ENCODE measurements at regions of chr10 and their contacts with region 1.

Region 1: GRCh38 chr10:43361986-43362839 is 9.2 kb upstream of the FXYD4 start:
- DNase-seq: peak; percentile 86 to 98 (median 97)
- ATAC-seq: peak; percentile 98
- H3K4me3 ChIP-seq: peak overlapping the region; percentile 92
- H3K4me3 Mint-ChIP-seq: peak overlapping the region; percentile 92 to 100 (median 97)
- H3K27ac ChIP-seq: peak overlapping the region; percentile 88
- H3K27ac Mint-ChIP-seq: peak overlapping the region; percentile 96 to 99 (median 97)
- H3K4me1 ChIP-seq: peaks cover 4 to 14% of the 10 kb centered on the region in 2 donors
- H3K4me1 Mint-ChIP-seq: peaks cover 13 to 33% (median 29%) of the 10 kb centered on the region in 7 donors
- H3K27me3 ChIP-seq: no peaks in the 10 kb centered on the region
- H3K27me3 Mint-ChIP-seq: no peaks in the 10 kb centered on the region

Region 2: GRCh38 chr10:42933448-42934340 is 428.5 kb before region 1 on chr10:
- CTCF ChIA-PET with region 1: interaction called, 3 read pairs
- POLR2A ChIA-PET with region 1: no interaction called
- intact Hi-C with region 1: loop called in 1 of 2 experiments (anchors 1 kb)
- DNase-seq: peak in 8 of 9 donors; percentile 24 to 81 (median 66)
- ATAC-seq: peak; percentile 66
- H3K4me3 ChIP-seq: peak overlapping the region; percentile 60
- H3K4me3 Mint-ChIP-seq: peak overlapping the region in 9 of 10 donors; percentile 87 to 93 (median 91)
- H3K27ac ChIP-seq: peak overlapping the region; percentile 73
- H3K27ac Mint-ChIP-seq: peak overlapping the region in 7 of 9 donors; percentile 82 to 95 (median 90)
- H3K4me1 ChIP-seq: peaks cover 0 to 12% of the 10 kb centered on the region in 2 donors
- H3K4me1 Mint-ChIP-seq: peaks cover 9 to 25% (median 19%) of the 10 kb centered on the region in 7 donors
- H3K27me3 ChIP-seq: no peaks in the 10 kb centered on the region
- H3K27me3 Mint-ChIP-seq: peaks cover 5 to 38% (median 31%) of the 10 kb centered on the region in 5 donors

Region 3: DNA sequence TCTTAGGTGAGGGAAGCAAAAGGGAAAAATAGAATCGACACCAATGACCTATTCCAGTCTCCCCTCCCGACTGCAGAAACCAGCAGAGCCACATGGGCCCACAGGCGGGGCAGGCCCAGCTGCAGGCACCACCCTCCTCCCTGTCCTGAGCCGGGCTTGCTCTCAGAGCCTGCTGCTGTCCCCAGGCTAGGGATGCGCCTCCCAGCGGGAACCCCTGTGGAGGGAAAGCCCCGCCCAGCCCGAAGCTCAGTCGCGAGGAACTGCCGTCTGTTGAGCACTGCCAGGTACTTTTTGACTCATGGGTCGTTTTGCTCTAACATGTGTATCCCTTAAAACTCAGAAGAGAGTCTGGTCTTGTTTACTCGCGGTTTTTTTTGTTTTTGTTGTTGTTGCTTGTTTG is 409.9 kb before region 1 on chr10:
- CTCF ChIA-PET with region 1: no interaction called
- POLR2A ChIA-PET with region 1: no interaction called
- intact Hi-C with region 1: no loop called
- DNase-seq: peak in 1 of 9 donors; percentile 15
- ATAC-seq: no peak
- H3K4me3 ChIP-seq: no peak overlapping the region
- H3K4me3 Mint-ChIP-seq: no peak overlapping the region
- H3K27ac ChIP-seq: no peak overlapping the region
- H3K27ac Mint-ChIP-seq: no peak overlapping the region
- H3K4me1 ChIP-seq: no peaks in the 10 kb centered on the region
- H3K4me1 Mint-ChIP-seq: peaks cover 0 to 2% (median 0%) of the 10 kb centered on the region in 7 donors
- H3K27me3 ChIP-seq: no peaks in the 10 kb centered on the region
- H3K27me3 Mint-ChIP-seq: peaks cover 0 to 15% (median 8%) of the 10 kb centered on the region in 5 donors

Region 4: GRCh38 chr10:43322769-43323168 is 39.4 kb before region 1 on chr10:
- CTCF ChIA-PET with region 1: no interaction called
- POLR2A ChIA-PET with region 1: no interaction called
- intact Hi-C with region 1: no loop called
- DNase-seq: peak; percentile 51 to 82 (median 63)
- ATAC-seq: peak; percentile 98
- H3K4me3 ChIP-seq: no peak overlapping the region
- H3K4me3 Mint-ChIP-seq: peak overlapping the region in 8 of 10 donors; percentile 23 to 64 (median 40)
- H3K27ac ChIP-seq: no peak overlapping the region
- H3K27ac Mint-ChIP-seq: peak overlapping the region in 3 of 9 donors; percentile 26 to 78 (median 76)
- H3K4me1 ChIP-seq: peaks cover 0 to 3% of the 10 kb centered on the region in 2 donors
- H3K4me1 Mint-ChIP-seq: peaks cover 0 to 38% (median 12%) of the 10 kb centered on the region in 7 donors
- H3K27me3 ChIP-seq: no peaks in the 10 kb centered on the region
- H3K27me3 Mint-ChIP-seq: peaks cover 8 to 27% (median 10%) of the 10 kb centered on the region in 5 donors

Region 5: DNA sequence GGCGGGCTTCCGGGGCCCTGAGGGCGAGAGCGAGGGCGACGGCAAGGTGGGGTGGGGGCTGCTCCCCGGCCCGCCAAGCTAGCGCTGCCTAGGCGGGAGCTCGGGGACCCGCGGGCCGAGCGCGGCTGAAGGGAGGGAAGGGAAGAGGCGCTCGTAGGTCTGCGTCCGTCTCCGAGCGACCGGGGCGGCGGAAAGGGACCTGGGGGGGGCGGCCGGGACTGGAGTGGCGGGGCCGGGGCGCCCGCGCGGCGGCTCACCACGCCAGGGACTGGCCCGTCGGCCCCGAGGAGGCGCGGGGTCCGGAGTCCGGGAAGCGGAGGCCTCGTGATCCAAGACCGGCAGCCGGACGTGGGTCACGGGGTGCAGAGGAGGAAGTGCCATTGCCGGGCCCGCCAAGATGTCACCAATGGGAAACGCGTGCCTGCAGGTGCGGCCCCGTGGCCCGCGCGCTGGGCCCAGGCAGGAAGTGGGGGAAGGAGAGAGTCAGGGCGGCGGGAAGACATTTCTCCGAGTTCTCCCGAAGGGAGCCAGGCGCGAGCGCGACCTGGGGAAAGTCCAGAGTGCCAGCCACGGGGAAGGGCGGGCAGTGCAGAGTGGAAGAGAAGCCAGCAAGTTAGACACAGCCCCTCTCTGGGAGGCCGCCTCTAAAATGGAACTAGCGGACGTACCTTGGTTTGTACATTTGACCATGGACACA is 34.9 kb after region 1 on chr10:
- CTCF ChIA-PET with region 1: no interaction called
- POLR2A ChIA-PET with region 1: interaction called, 12 read pairs
- intact Hi-C with region 1: loop called (anchors 1 kb)
- DNase-seq: peak; percentile 61 to 85 (median 68)
- ATAC-seq: peak; percentile 78
- H3K4me3 ChIP-seq: peak overlapping the region; percentile 70
- H3K4me3 Mint-ChIP-seq: peak overlapping the region; percentile 90 to 100 (median 94)
- H3K27ac ChIP-seq: peak overlapping the region; percentile 89
- H3K27ac Mint-ChIP-seq: peak overlapping the region; percentile 87 to 99 (median 97)
- H3K4me1 ChIP-seq: peaks cover 55 to 66% of the 10 kb centered on the region in 2 donors
- H3K4me1 Mint-ChIP-seq: peaks cover 67 to 93% (median 81%) of the 10 kb centered on the region in 7 donors
- H3K27me3 ChIP-seq: no peaks in the 10 kb centered on the region
- H3K27me3 Mint-ChIP-seq: no peaks in the 10 kb centered on the region

Region 6: DNA sequence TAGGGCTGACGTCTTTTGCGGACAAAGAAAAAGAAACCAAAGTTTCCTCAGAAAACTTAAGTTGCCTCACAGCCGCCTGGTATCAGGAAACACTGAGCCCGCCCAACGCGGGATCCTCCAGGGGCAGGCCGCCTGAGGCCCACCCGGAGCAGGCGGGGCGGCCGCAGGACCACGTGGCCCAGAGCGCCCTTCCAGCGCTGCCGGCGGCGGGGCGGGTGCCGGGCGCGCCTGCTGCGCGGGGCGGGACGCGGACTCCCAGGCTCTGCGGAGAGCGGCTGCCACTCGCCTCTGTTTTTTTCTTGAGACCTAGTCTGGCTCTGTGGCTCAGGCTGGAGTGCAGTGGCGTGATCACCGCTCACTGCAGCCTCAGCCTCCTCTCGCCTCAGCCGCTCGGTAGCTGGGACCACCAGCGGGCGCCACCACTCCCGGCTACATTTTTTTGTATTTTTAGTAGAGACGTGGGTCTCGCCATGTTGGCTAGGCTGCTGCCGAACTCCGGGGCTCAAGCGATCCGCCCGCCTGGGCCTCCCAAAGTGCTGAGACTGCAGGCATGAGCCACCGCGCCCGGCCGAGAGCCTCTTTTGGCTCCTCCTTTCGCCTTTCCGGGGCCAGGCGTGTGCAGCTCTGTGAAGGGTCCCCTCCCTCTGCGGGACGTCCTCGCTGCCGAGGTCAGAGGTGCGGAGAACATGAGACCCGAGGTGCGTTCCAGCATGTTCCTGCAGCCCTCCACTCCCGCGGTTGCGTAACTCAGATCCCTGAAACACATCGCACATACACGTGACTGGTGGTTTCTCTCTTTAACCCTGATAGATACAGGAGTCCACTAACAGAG is 58.4 kb after region 1 on chr10:
- CTCF ChIA-PET with region 1: no interaction called
- POLR2A ChIA-PET with region 1: interaction called, 6 read pairs
- intact Hi-C with region 1: loop called in 1 of 2 experiments (anchors 1 kb)
- DNase-seq: peak; percentile 69 to 86 (median 81)
- ATAC-seq: peak; percentile 94
- H3K4me3 ChIP-seq: peak overlapping the region; percentile 62
- H3K4me3 Mint-ChIP-seq: peak overlapping the region; percentile 87 to 98 (median 92)
- H3K27ac ChIP-seq: peak overlapping the region; percentile 95
- H3K27ac Mint-ChIP-seq: peak overlapping the region; percentile 91 to 99 (median 98)
- H3K4me1 ChIP-seq: peaks cover 24 to 29% of the 10 kb centered on the region in 2 donors
- H3K4me1 Mint-ChIP-seq: peaks cover 17 to 46% (median 41%) of the 10 kb centered on the region in 7 donors
- H3K27me3 ChIP-seq: no peaks in the 10 kb centered on the region
- H3K27me3 Mint-ChIP-seq: no peaks in the 10 kb centered on the region

Region 7: DNA sequence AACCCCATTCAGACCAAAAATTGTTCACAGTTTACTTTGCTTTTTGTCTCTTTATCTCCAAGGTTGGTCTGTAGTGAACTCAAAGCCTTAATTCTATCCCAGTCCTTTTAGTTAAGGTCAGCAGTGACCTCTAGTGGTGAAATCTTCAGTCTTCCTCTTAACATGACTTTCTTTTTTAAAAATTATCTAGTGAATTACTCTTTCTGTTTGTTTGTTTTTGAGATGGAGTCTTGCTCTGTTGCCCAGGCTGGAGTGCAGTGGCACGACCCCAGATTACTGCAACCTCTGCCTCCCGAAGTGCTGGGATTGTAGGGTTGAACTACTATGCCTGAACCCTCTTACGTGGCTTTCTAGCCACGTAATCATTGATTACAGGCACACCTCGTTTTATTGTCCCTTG is 99.7 kb after region 1 on chr10:
- CTCF ChIA-PET with region 1: interaction called, 5 read pairs
- POLR2A ChIA-PET with region 1: interaction called, 4 read pairs
- intact Hi-C with region 1: loop called in 1 of 2 experiments (anchors 1 kb)
- DNase-seq: peak in 7 of 9 donors; percentile 62 to 79 (median 70)
- ATAC-seq: peak; percentile 92
- H3K4me3 ChIP-seq: no peak overlapping the region
- H3K4me3 Mint-ChIP-seq: peak overlapping the region in 1 of 10 donors; percentile 20
- H3K27ac ChIP-seq: no peak overlapping the region
- H3K27ac Mint-ChIP-seq: peak overlapping the region in 6 of 9 donors; percentile 2 to 67 (median 40)
- H3K4me1 ChIP-seq: peaks cover 1 to 7% of the 10 kb centered on the region in 2 donors
- H3K4me1 Mint-ChIP-seq: peaks cover 4 to 22% (median 19%) of the 10 kb centered on the region in 7 donors
- H3K27me3 ChIP-seq: no peaks in the 10 kb centered on the region
- H3K27me3 Mint-ChIP-seq: no peaks in the 10 kb centered on the region

Measured in naive thymus-derived CD4-positive, alpha-beta T cell (primary cell).